ENCODE measurements at regions of chr14 and their contacts with region 1.

Region 1: DNA sequence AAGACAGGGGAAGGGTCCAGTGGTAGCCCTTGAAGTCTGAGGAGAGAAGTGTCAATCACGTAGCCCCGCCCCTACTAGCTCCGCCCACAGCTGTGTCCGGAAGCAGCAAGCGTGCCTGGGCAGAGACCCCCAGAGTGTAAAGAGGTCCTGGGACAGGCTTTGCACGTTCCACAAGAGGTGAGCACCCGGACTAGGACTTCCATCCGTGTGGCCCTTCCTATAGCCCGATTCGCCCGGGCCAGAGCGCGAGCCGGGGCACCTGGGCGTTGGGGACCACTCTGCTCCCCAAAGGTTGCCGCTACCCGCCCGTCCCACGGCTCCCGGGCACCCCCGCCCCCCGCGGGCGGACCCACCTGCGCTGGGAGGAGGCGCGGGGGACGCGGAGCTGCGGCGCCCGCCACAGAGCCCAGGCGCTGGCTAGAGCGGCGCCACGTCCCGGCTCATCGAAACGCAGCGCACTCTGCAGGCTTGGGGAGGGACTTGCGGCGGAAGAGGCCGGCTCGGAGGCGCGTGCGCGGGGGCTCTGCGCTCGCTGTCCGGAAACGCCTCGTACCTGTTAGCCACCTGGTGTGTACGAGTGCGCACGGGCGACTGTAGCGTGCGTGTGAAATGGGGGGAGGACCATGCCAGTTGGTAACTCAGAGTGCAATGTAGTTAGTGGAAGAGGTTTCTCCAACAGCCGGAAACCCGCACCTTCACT is at the start of gene RABGGTA:
- DNase-seq: peak; percentile 96
- ATAC-seq: peak; percentile 95
- H3K4me3 ChIP-seq: peak within 1 kb of the TSS; percentile 78 to 96 (median 78)
- H3K27ac ChIP-seq: peak within 1 kb of the TSS; percentile 92
- H3K4me1 ChIP-seq: peaks cover 22% of the 10 kb centered on the region
- H3K27me3 ChIP-seq: no peaks in the 10 kb centered on the region; a peak in 1 of 5 replicates
- CTCF ChIP-seq: peak; percentile 99
- EP300 ChIP-seq: peak; percentile 76 to 86; a peak in 3 of 4 replicates
- POLR2A ChIP-seq: peak in 1 of 2 experiments; percentile 96; a peak in 2 of 4 replicates
- RAD21 ChIP-seq: peak; percentile 91
- total RNA-seq, gene RABGGTA: 31.2 and 57.9 TPM in 2 replicates

Region 2: DNA sequence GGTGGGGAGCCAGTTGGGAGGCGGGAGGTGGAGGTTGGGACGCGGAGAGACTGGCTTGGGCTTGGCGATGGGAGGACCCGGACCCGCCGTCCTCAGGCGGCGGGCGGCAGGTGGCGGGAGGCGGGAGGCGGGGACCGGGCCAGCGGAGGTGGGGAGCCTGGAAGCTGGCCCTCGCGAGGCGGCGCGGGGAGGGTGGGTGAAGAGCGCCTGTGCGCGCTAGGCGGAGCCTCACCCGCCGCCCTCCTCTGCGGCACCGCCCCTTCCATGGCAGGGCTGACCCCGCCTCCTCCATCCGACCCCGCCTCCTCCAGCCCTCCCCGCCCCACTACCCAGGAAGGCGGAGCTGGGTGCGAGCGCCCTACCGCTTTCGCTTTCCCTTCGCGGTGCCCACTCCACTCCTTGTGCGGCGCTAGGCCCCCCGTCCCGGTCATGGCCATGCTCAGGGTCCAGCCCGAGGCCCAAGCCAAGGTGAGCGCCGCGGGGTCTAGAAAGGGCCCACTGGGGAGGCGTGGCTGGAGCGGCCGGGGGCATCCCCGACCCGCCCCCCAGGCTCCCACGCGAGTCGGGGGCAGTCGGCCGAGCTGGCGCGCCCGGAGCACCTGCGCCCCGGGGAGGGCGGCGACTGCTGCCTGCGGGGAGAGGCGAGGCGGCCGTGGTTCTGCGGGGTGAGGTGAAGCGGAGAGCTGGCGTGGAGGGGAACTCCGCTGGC is 135.3 kb before region 1 on chr14 and contains the start of gene PSME1:
- CTCF ChIA-PET with region 1: no interaction called
- POLR2A ChIA-PET with region 1: interaction called, 15 read pairs
- in situ Hi-C with region 1: no loop called
- intact Hi-C with region 1: no loop called
- DNase-seq: peak; percentile 93
- ATAC-seq: peak; percentile 86
- H3K4me3 ChIP-seq: peak within 1 kb of the TSS; percentile 91 to 98 (median 93)
- H3K27ac ChIP-seq: peak within 1 kb of the TSS; percentile 75
- H3K4me1 ChIP-seq: peaks cover 64% of the 10 kb centered on the region
- H3K27me3 ChIP-seq: no peaks in the 10 kb centered on the region; a peak in 1 of 5 replicates
- CTCF ChIP-seq: peak; percentile 47; the same call in 1 of the 2 replicates
- EP300 ChIP-seq: peak; percentile 23 to 43; a peak in 1 of 4 replicates
- POLR2A ChIP-seq: peak in 1 of 2 experiments; percentile 31; a peak in 1 of 4 replicates
- RAD21 ChIP-seq: peak; percentile 71
- total RNA-seq, gene PSME1: 608 and 713 TPM in 2 replicates

Region 3: GRCh38 chr14:24160850-24161804 is 110.2 kb before region 1 on chr14 and contains the start of gene IRF9:
- CTCF ChIA-PET with region 1: no interaction called
- POLR2A ChIA-PET with region 1: interaction called, 18 read pairs
- in situ Hi-C with region 1: no loop called
- intact Hi-C with region 1: no loop called
- DNase-seq: peak; percentile 99
- ATAC-seq: peak; percentile 92
- H3K4me3 ChIP-seq: peak within 1 kb of the TSS; percentile 50 to 78 (median 64)
- H3K27ac ChIP-seq: peak within 1 kb of the TSS; percentile 62
- H3K4me1 ChIP-seq: peaks cover 28% of the 10 kb centered on the region
- H3K27me3 ChIP-seq: no peaks in the 10 kb centered on the region; a peak in 1 of 5 replicates
- CTCF ChIP-seq: peak; percentile 100
- EP300 ChIP-seq: peak; percentile 55 to 85; a peak in 3 of 4 replicates
- POLR2A ChIP-seq: peak in 1 of 2 experiments; percentile 66; a peak in 2 of 4 replicates
- RAD21 ChIP-seq: peak; percentile 99
- total RNA-seq, gene IRF9: 13.8 and 14.9 TPM in 2 replicates

Region 4: GRCh38 chr14:24215495-24216344 is 55.6 kb before region 1 on chr14 and contains the start of gene MDP1:
- CTCF ChIA-PET with region 1: interaction called, 10 read pairs
- POLR2A ChIA-PET with region 1: interaction called, 99 read pairs
- in situ Hi-C with region 1: no loop called
- intact Hi-C with region 1: loop called (anchors 2 kb)
- DNase-seq: peak; percentile 95
- ATAC-seq: peak; percentile 81
- H3K4me3 ChIP-seq: peak within 1 kb of the TSS; percentile 67 to 98 (median 81)
- H3K27ac ChIP-seq: peak within 1 kb of the TSS; percentile 72
- H3K4me1 ChIP-seq: peaks cover 39% of the 10 kb centered on the region
- H3K27me3 ChIP-seq: no peaks in the 10 kb centered on the region; a peak in 1 of 5 replicates
- CTCF ChIP-seq: peak; percentile 100
- EP300 ChIP-seq: peak in 1 of 2 experiments; percentile 74; a peak in 3 of 4 replicates
- POLR2A ChIP-seq: peak in 1 of 2 experiments; percentile 97; a peak in 2 of 4 replicates
- RAD21 ChIP-seq: peak; percentile 96
- total RNA-seq, gene MDP1: 48.7 and 66.0 TPM in 2 replicates

Region 5: GRCh38 chr14:24259252-24259995 is 11.9 kb before region 1 on chr14:
- CTCF ChIA-PET with region 1: no interaction called
- POLR2A ChIA-PET with region 1: interaction called, 254 read pairs
- in situ Hi-C with region 1: no loop called
- intact Hi-C with region 1: no loop called
- DNase-seq: no peak
- ATAC-seq: no peak
- H3K4me3 ChIP-seq: no peak overlapping the region
- H3K27ac ChIP-seq: no peak overlapping the region
- H3K4me1 ChIP-seq: peaks cover 33% of the 10 kb centered on the region
- H3K27me3 ChIP-seq: no peaks in the 10 kb centered on the region
- CTCF ChIP-seq: no peak
- EP300 ChIP-seq: no peak
- POLR2A ChIP-seq: no peak
- RAD21 ChIP-seq: no peak

Region 6: GRCh38 chr14:24299255-24300195 is 28.2 kb after region 1 on chr14 and contains the starts of genes DHRS1 and NOP9:
- CTCF ChIA-PET with region 1: interaction called, 10 read pairs
- POLR2A ChIA-PET with region 1: interaction called, 113 read pairs
- in situ Hi-C with region 1: no loop called
- intact Hi-C with region 1: loop called (anchors 1 kb)
- DNase-seq: peak; percentile 93
- ATAC-seq: peak; percentile 80
- H3K4me3 ChIP-seq: peak within 1 kb of the TSS; percentile 79 to 98 (median 89)
- H3K27ac ChIP-seq: peak within 1 kb of the TSS; percentile 83
- H3K4me1 ChIP-seq: peaks cover 45% of the 10 kb centered on the region
- H3K27me3 ChIP-seq: no peaks in the 10 kb centered on the region; a peak in 1 of 5 replicates
- CTCF ChIP-seq: peak; percentile 53
- EP300 ChIP-seq: peak; percentile 63 to 81; a peak in 3 of 4 replicates
- POLR2A ChIP-seq: peak in 1 of 2 experiments; percentile 88; a peak in 2 of 4 replicates
- RAD21 ChIP-seq: peak; percentile 54; the same call in 1 of the 2 replicates
- total RNA-seq, gene DHRS1: 46.3 and 60.8 TPM in 2 replicates
- total RNA-seq, gene NOP9: 61.6 and 64.5 TPM in 2 replicates

Region 7: GRCh38 chr14:24431569-24432258 is 160.4 kb after region 1 on chr14:
- CTCF ChIA-PET with region 1: no interaction called
- POLR2A ChIA-PET with region 1: interaction called, 32 read pairs
- in situ Hi-C with region 1: no loop called
- intact Hi-C with region 1: no loop called
- DNase-seq: peak; percentile 97
- ATAC-seq: peak; percentile 66
- H3K4me3 ChIP-seq: peak overlapping the region in 2 of 3 experiments; percentile 80 to 82; a peak in 4 of 6 replicates
- H3K27ac ChIP-seq: no peak overlapping the region
- H3K4me1 ChIP-seq: peaks cover 52% of the 10 kb centered on the region
- H3K27me3 ChIP-seq: no peaks in the 10 kb centered on the region; a peak in 1 of 5 replicates
- CTCF ChIP-seq: peak; percentile 100
- EP300 ChIP-seq: 0 out of 4 replicates have a peak, but pooled peaks of 1 of the 2 experiments have one; percentile 45
- POLR2A ChIP-seq: peak in 1 of 2 experiments; percentile 21; a peak in 2 of 4 replicates
- RAD21 ChIP-seq: peak; percentile 100